IMR-90 (cell line): ENCODE measurements at regions of chr2 and their contacts with region 1.

Region 1: DNA sequence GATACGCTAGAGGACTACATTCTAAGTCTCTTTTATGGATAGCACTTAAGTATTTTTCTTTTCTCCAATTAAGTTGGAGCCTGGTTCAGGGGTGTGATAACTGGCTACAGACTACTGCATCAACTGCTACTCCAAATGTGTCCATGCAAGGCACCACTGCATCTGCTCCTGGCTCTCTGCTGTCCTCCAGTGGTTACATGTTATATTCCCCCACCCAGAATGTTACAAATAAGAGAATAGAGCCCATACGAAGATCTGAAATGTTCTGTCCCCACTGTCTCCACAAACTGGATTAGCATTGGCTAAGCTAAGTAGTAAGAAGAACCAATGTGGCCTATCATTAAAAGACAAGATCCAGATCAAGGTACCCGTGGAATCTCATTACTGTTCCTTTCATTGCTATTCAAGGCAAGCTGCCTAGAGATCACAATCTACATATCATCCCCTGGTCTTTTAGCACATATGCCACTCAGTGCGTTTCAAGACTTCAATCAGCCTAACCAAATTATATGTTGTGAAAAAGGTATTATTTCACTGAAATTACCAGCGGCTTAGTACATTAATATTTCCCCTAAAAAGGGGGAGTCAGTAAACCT is 308.3 kb upstream of the SLC8A1 start:
- DNase-seq: peak; percentile 69
- ATAC-seq: peak; percentile 99
- H3K4me3 ChIP-seq: no peak overlapping the region
- H3K27ac ChIP-seq: no peak overlapping the region
- H3K4me1 ChIP-seq: no peaks in the 10 kb centered on the region
- H3K27me3 ChIP-seq: no peaks in the 10 kb centered on the region
- CTCF ChIP-seq: peak; percentile 97
- POLR2A ChIP-seq: no peak
- RAD21 ChIP-seq: peak; percentile 98

Region 2: GRCh38 chr2:39845460-39846146 is 914.6 kb before region 1 on chr2:
- CTCF ChIA-PET with region 1: no interaction called
- POLR2A ChIA-PET with region 1: no interaction called
- dilution Hi-C with region 1: no loop called
- in situ Hi-C with region 1: no loop called
- intact Hi-C with region 1: loop called (anchors 10 kb)
- DNase-seq: peak; percentile 17
- ATAC-seq: no peak
- H3K4me3 ChIP-seq: no peak overlapping the region
- H3K27ac ChIP-seq: no peak overlapping the region
- H3K4me1 ChIP-seq: no peaks in the 10 kb centered on the region
- H3K27me3 ChIP-seq: 0 out of 2 replicates have a peak, but pooled peaks cover 2% of the 10 kb centered on the region
- CTCF ChIP-seq: no peak
- POLR2A ChIP-seq: no peak
- RAD21 ChIP-seq: no peak

Region 3: GRCh38 chr2:39919511-39920306 is 840.5 kb before region 1 on chr2:
- CTCF ChIA-PET with region 1: no interaction called
- POLR2A ChIA-PET with region 1: no interaction called
- dilution Hi-C with region 1: no loop called
- in situ Hi-C with region 1: loop called (anchors 5 kb)
- intact Hi-C with region 1: no loop called
- DNase-seq: no peak
- ATAC-seq: peak; percentile 22; the same call in 1 of the 2 replicates
- H3K4me3 ChIP-seq: no peak overlapping the region
- H3K27ac ChIP-seq: no peak overlapping the region; the same call in 1 of the 2 replicates
- H3K4me1 ChIP-seq: peaks cover 9% of the 10 kb centered on the region
- H3K27me3 ChIP-seq: no peaks in the 10 kb centered on the region
- CTCF ChIP-seq: no peak
- POLR2A ChIP-seq: no peak
- RAD21 ChIP-seq: no peak

Region 4: DNA sequence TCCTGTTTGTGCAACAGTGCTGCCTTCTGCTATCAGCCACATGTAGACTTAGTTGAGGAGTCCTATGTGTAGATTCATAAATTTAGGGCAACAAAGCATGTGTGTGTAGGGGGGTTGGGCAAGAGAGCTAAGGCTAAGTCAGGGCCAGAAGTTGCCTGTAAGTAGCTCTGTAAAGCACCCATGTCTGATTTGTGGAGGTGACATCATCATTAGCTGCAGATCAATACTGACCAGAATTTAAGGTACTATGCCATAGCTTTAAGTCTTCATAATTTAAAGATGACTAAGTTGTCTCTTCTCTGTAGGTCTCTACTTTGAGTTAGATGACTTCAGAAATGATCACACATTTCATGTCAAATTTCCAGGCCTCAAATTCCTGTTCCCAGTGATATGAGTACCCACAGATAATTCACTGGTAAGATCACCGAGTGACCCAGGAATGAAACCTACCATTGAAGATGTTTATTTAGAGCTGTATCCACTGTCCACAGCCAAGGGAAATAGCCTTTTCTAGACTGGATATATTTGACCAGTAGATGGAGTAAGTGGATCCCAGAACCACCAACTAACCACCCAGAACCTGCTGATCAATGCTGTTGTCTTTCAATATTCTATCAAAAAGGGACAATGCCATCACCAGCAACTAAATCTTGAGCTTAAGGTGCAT is 547.2 kb before region 1 on chr2:
- CTCF ChIA-PET with region 1: interaction called, 3 read pairs
- POLR2A ChIA-PET with region 1: no interaction called
- dilution Hi-C with region 1: no loop called
- in situ Hi-C with region 1: loop called (anchors 10 kb)
- intact Hi-C with region 1: loop called (anchors 2 kb)
- DNase-seq: peak; percentile 83
- ATAC-seq: peak; percentile 92
- H3K4me3 ChIP-seq: no peak overlapping the region
- H3K27ac ChIP-seq: peak overlapping the region; percentile 45; the same call in 1 of the 2 replicates
- H3K4me1 ChIP-seq: peaks cover 13% of the 10 kb centered on the region
- H3K27me3 ChIP-seq: no peaks in the 10 kb centered on the region
- CTCF ChIP-seq: peak; percentile 65
- POLR2A ChIP-seq: no peak
- RAD21 ChIP-seq: peak; percentile 75

Region 5: DNA sequence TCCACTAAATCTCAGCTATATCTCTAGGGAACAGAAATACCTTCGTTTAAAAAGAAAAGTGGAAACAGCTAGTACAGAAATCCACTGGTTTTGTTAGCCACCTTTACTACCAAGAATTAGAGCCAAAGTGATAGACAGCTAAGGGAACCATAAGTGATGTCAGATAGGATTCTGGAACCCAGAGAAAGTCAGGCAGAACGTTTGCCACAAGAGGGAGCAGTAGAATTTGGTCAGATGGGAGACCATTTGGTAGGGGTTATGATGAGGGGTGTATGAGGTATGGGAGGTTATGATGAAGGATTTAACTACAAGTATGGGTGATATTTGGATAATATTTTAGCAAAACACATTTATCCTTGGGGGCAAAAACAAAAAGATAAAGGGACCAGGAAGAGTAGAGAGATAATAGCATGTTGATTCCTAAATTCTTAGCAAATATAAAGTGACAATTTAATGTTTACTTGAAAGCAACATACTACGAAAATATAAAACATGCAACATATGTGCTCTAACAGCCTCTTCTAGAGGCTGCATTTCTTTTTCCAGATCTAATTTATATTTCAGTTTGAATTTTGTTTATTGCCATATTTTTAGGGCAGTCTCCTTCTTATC is 311.6 kb before region 1 on chr2:
- CTCF ChIA-PET with region 1: no interaction called
- POLR2A ChIA-PET with region 1: no interaction called
- dilution Hi-C with region 1: no loop called
- in situ Hi-C with region 1: no loop called
- intact Hi-C with region 1: loop called (anchors 1 kb)
- DNase-seq: peak; percentile 52
- ATAC-seq: no peak
- H3K4me3 ChIP-seq: no peak overlapping the region
- H3K27ac ChIP-seq: no peak overlapping the region
- H3K4me1 ChIP-seq: peaks cover 6% of the 10 kb centered on the region
- H3K27me3 ChIP-seq: no peaks in the 10 kb centered on the region
- CTCF ChIP-seq: peak; percentile 51
- POLR2A ChIP-seq: no peak
- RAD21 ChIP-seq: peak; percentile 44

Region 6: GRCh38 chr2:40488101-40488601 is 272.0 kb before region 1 on chr2:
- CTCF ChIA-PET with region 1: interaction called, 3 read pairs
- POLR2A ChIA-PET with region 1: no interaction called
- dilution Hi-C with region 1: no loop called
- in situ Hi-C with region 1: loop called (anchors 25 kb)
- intact Hi-C with region 1: loop called (anchors 1 kb)
- DNase-seq: peak; percentile 56
- ATAC-seq: peak; percentile 56
- H3K4me3 ChIP-seq: no peak overlapping the region
- H3K27ac ChIP-seq: no peak overlapping the region
- H3K4me1 ChIP-seq: peaks cover 2% of the 10 kb centered on the region; the same call in 1 of the 2 replicates
- H3K27me3 ChIP-seq: no peaks in the 10 kb centered on the region
- CTCF ChIP-seq: peak; percentile 58
- POLR2A ChIP-seq: no peak
- RAD21 ChIP-seq: peak; percentile 40

Region 7: GRCh38 chr2:40824278-40824677 is 64.1 kb after region 1 on chr2:
- CTCF ChIA-PET with region 1: no interaction called
- POLR2A ChIA-PET with region 1: no interaction called
- dilution Hi-C with region 1: no loop called
- in situ Hi-C with region 1: no loop called
- intact Hi-C with region 1: no loop called
- DNase-seq: no peak
- ATAC-seq: no peak
- H3K4me3 ChIP-seq: no peak overlapping the region
- H3K27ac ChIP-seq: no peak overlapping the region
- H3K4me1 ChIP-seq: no peaks in the 10 kb centered on the region
- H3K27me3 ChIP-seq: 0 out of 2 replicates have a peak, but pooled peaks cover 2% of the 10 kb centered on the region
- CTCF ChIP-seq: no peak
- POLR2A ChIP-seq: no peak
- RAD21 ChIP-seq: no peak

Region 8: GRCh38 chr2:41127351-41127750 is 367.2 kb after region 1 on chr2:
- CTCF ChIA-PET with region 1: no interaction called
- POLR2A ChIA-PET with region 1: no interaction called
- dilution Hi-C with region 1: no loop called
- in situ Hi-C with region 1: no loop called
- intact Hi-C with region 1: no loop called
- DNase-seq: no peak
- ATAC-seq: no peak
- H3K4me3 ChIP-seq: no peak overlapping the region
- H3K27ac ChIP-seq: no peak overlapping the region
- H3K4me1 ChIP-seq: no peaks in the 10 kb centered on the region
- H3K27me3 ChIP-seq: no peaks in the 10 kb centered on the region
- CTCF ChIP-seq: no peak
- POLR2A ChIP-seq: no peak
- RAD21 ChIP-seq: no peak

Region 9: DNA sequence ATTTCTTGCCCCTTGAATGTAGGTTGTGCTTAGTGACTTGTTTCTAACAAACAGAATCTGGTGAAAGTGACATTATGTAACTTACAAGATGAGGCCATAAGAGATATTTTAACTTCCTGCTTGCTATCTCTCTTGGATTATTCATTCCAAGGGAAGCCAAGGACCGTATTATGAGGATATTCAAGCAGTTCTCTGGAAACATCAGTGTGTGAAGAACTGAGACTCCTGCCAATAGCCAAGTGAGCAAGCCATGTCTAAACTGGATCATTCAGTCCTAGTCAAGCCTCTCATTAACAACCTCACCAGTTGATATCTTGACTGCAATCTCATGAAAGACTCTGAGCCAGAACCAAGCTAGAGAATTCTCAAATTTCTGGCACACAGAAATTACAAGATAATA is 456.8 kb after region 1 on chr2:
- CTCF ChIA-PET with region 1: no interaction called
- POLR2A ChIA-PET with region 1: no interaction called
- dilution Hi-C with region 1: no loop called
- in situ Hi-C with region 1: no loop called
- intact Hi-C with region 1: no loop called
- DNase-seq: no peak
- ATAC-seq: no peak
- H3K4me3 ChIP-seq: no peak overlapping the region
- H3K27ac ChIP-seq: no peak overlapping the region
- H3K4me1 ChIP-seq: no peaks in the 10 kb centered on the region
- H3K27me3 ChIP-seq: no peaks in the 10 kb centered on the region
- CTCF ChIP-seq: no peak
- POLR2A ChIP-seq: no peak
- RAD21 ChIP-seq: no peak

Region 10: DNA sequence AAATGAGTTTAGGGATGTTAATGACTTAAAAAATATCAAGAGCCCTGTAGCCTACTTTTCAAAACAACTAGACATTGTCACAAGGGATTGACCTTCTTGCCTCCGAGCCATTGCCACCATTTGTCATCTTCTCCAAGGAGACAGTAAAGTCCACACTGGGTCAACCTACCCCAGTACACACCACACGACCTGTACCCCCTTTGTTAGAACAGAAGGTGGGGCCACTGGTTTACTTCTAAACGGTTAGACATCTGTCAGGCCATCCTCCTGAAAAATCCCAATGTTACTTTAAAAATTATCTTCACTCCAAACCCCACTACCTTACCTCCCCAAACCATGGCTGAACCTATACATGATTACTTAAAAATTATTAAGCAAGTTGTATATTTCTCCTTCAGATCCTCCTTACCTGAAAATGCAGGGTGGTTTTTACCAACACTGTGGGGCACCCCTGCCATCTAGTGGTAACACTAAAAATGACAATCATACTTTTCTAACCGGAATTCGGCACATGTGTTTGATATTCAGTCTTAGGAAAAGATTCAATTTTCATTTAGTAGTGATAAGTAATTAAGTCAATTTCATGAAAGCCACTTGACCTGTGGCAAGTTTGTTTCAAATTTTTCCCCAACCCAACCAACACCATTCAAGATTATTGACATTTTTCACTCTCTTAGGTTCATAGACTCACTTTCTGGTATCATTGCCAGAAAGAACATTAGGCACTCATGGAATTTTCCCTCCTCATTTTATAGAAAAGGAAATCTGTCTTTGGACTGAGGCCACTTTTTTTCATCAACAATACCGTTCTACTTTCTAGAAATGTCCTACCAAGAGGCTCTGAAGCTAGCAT is 1022.4 kb after region 1 on chr2:
- CTCF ChIA-PET with region 1: no interaction called
- POLR2A ChIA-PET with region 1: no interaction called
- dilution Hi-C with region 1: no loop called
- in situ Hi-C with region 1: no loop called
- intact Hi-C with region 1: loop called (anchors 10 kb)
- DNase-seq: peak; percentile 30
- ATAC-seq: peak; percentile 74
- H3K4me3 ChIP-seq: no peak overlapping the region
- H3K27ac ChIP-seq: no peak overlapping the region
- H3K4me1 ChIP-seq: no peaks in the 10 kb centered on the region
- H3K27me3 ChIP-seq: peaks cover 6% of the 10 kb centered on the region
- CTCF ChIP-seq: peak; percentile 73
- POLR2A ChIP-seq: no peak
- RAD21 ChIP-seq: peak; percentile 84